Dendritic cell treated with granulocyte-macrophage colony-stimulating factor and Interleukin-4, amounts not matched to agents 40 ng/mL and 50 ng/mL, for 4 days (primary cell): ENCODE measurements at regions of chr5 and their contacts with region 1.

Region 1: DNA sequence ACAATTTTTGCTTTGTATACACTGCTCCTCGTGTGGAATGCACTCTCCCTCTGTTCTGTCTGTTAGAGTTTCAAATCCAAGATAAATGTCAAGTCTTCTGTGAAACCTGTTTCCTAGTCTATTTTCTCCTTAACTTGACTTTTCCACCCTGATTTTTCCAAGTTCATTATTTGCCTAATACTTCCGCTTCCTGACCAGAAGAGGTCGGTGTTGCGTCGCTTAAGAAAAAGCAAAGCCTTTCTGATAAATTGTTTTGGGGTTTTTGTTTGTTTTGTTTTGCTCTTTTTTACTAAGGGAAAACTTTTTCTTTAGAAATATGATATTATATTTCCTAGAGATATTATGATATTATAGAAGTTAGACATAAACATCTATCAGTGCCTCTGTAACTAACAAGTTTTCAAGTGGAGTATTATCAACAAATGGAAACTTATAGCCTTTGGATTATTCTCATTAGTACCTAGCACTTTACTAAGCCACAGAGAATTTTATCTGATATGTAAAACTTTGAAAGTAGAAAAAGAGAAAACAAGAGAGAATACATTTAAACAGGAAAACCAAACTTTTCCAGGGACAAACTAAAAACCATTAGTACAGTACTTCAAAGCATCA is 55.8 kb downstream of the PHAX start:
- H3K4me3 Mint-ChIP-seq: no peak overlapping the region
- H3K27ac Mint-ChIP-seq: no peak overlapping the region
- H3K4me1 Mint-ChIP-seq: peaks cover 9% of the 10 kb centered on the region
- H3K27me3 Mint-ChIP-seq: peaks cover 3% of the 10 kb centered on the region

Region 2: DNA sequence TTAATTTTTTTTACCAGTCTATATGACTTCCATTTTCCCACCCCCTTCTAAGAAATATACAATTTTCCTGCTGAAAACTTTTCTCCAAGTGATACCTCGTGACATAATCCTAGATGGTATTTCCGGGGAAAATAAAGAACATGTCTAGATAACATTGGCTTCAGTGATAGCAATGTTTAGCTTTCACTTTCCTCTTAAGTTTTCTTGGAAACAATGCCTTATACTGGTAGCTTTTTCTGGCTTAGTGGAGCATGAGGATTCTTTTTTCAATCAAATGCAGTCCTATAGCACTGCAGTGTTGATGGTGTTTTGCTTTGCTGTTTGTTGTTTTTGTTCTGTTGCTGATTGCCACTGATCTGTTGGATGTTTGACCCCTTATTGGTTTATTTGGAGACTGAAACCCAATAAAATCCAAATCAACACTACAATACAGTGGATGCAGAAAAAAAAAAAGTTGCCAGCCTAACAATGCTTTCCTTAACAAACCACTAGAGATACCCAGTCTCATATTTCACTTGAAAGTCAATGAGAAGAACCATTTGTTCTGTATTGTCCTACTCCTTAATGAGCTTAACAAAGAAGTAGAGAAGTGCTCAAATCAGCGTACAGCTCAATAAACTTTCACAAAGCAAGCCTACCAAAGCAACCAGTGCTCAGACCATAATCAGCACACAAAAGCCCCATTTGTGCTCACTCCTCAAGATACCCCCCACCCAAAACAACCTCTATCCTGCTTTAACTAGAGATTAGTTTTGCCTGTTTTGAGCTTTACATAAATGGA is 307.5 kb before region 1 on chr5:
- intact Hi-C with region 1: no loop called
- H3K4me3 Mint-ChIP-seq: no peak overlapping the region
- H3K27ac Mint-ChIP-seq: no peak overlapping the region
- H3K4me1 Mint-ChIP-seq: peaks cover 3% of the 10 kb centered on the region
- H3K27me3 Mint-ChIP-seq: peaks cover 20% of the 10 kb centered on the region

Region 3: DNA sequence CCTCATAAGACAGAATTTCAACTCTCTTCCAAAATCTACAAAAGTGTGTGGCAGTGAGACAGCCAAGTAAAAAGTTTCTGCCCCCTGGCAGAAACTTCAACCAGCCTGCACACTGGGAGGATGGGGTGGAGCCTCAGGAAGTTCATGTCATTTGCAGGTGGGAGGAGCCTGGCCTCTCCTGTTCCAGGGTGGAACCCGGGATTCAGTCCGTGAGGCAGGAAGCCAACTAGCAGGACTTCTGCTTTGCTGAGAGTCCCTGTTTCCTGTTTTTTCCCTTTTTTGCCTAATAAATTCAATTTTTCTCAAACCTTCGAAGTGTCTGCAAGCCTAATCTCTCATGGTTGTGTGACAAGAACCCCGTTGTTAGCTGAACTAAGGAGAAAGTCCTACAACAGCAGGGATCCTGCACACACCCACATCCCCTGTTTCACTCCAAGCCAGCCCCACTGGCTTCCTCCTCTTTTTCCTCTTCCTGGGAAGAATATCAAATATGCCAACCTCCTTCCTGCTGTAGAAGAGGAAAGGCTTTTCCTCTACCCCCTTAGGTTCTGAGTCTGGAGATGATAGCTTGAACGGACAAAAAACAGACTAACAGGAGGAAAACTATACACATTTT is 130.8 kb before region 1 on chr5:
- intact Hi-C with region 1: no loop called
- H3K4me3 Mint-ChIP-seq: peak overlapping the region; percentile 11
- H3K27ac Mint-ChIP-seq: peak overlapping the region; percentile 55
- H3K4me1 Mint-ChIP-seq: peaks cover 9% of the 10 kb centered on the region
- H3K27me3 Mint-ChIP-seq: no peaks in the 10 kb centered on the region

Region 4: DNA sequence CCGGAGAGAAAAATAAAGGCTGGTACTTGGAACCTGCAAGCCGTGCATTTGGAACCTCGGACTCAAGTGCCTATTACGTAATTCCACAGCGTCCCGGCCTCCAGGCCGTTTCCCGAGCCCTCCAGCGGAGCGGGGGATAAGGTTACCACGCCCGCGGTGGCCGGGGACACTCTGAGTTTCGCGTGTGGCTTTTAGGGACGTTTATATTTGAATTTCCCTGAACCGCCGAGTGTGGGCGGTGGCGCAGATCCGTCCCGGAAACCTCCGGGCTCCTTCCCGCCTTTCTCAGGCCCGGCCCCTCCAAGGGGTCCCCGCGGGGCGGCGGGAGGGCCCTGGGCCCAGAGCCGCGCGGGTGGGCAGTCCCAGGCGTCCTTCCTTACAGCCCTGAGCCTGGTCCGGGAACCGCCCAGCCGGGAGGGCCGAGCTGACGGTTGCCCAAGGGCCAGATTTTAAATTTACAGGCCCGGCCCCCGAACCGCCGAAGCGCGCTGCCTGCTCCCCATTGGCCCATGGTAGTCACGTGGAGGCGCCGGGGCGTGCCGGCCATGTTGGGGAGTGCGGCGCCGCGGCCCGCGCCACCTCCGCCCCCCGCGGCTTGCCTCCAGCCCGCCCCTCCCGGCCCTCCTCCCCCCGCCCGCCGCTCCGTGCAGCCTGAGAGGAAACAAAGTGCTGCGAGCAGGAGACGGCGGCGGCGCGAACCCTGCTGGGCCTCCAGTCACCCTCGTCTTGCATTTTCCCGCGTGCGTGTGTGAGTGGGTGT is 120.2 kb after region 1 on chr5 and contains the start of gene LMNB1:
- intact Hi-C with region 1: loop called (anchors 1 kb)
- H3K4me3 Mint-ChIP-seq: peak within 1 kb of the TSS; percentile 93
- H3K27ac Mint-ChIP-seq: peak within 1 kb of the TSS; percentile 98
- H3K4me1 Mint-ChIP-seq: peaks cover 32% of the 10 kb centered on the region
- H3K27me3 Mint-ChIP-seq: no peaks in the 10 kb centered on the region

Region 5: DNA sequence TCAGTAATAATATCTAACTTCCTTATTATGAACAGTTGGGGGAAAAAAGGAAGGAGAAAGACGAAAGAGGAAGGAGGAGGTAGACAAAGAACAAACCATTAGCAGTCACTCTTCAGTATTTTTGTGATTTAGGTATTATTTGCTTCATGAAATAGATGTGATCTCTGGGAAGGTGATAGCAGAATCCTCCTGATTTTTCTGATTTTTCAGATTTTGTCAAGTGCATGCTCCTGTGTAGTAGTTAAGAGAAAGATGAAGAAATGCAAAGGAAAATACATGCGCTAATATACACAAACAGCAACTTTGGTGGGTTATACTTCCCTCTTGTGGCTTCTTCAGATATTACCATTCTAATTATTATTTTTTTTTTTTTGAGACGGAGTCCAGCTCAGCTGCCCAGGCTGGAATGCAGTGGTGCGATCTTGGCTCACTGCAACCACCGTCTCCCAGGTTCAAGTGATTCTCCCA is 152.1 kb after region 1 on chr5:
- intact Hi-C with region 1: loop called (anchors 2 kb)
- H3K4me3 Mint-ChIP-seq: peak overlapping the region; percentile 76
- H3K27ac Mint-ChIP-seq: peak overlapping the region; percentile 82
- H3K4me1 Mint-ChIP-seq: peaks cover 37% of the 10 kb centered on the region
- H3K27me3 Mint-ChIP-seq: no peaks in the 10 kb centered on the region

Region 6: DNA sequence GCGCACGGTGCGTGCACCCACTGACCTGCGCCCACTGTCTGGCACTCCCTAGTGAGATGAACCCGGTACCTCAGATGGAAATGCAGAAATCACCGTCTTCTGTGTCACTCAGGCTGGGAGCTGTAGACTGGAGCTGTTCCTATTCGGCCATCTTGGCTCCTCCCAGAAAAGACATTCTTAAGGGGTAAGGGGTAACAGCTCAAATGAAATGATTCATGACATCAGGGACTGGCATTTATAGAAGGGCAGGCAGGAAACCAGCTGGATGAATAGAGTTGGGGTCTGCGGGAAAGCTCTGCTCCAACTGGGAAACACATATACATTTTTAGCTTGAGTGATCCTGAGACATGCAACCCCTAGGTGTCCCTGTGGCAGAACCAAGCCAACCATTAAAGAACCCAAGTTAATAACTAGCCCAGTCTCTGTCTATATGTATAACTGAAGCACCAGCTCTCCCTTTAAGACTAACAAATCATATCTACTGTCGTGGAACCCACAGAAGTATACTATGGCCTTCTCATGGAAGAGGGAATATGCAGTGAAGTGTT is 239.7 kb after region 1 on chr5:
- intact Hi-C with region 1: no loop called
- H3K4me3 Mint-ChIP-seq: no peak overlapping the region
- H3K27ac Mint-ChIP-seq: no peak overlapping the region
- H3K4me1 Mint-ChIP-seq: no peaks in the 10 kb centered on the region
- H3K27me3 Mint-ChIP-seq: no peaks in the 10 kb centered on the region

Region 7: GRCh38 chr5:127313847-127314473 is 657.5 kb after region 1 on chr5:
- intact Hi-C with region 1: loop called (anchors 1 kb)
- H3K4me3 Mint-ChIP-seq: no peak overlapping the region
- H3K27ac Mint-ChIP-seq: no peak overlapping the region
- H3K4me1 Mint-ChIP-seq: no peaks in the 10 kb centered on the region
- H3K27me3 Mint-ChIP-seq: peaks cover 2% of the 10 kb centered on the region

Region 8: DNA sequence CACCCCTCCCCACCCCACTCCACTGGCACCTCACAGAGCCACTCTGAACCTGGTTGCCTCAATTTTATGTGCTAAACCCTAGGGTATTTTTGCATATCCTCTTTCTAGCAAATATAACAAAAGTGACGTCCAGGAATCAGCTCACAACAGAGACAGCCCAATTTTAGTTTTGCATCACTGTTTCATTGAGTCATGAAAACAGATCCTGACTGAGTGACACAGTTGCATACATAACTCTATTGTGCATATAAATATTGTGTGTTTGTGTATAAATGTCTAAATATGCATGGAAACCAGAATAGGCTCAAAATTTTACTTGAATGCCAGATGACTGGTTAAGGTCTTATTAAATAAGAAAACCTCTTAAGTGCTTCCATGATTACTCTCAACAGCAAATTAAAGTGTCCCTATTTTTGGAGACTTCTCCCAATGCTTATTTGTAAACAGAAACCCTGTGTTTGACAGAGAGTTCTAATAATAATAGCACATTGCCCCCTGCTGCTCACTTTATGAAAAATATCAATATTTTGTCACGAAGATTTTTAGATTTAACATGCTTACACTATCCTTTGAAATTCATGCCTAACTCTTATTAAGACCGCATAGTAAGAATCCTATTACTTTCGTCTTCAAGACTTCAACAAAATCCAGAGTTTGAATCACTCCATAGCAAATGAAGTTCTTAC is 785.4 kb after region 1 on chr5:
- intact Hi-C with region 1: loop called (anchors 5 kb)
- H3K4me3 Mint-ChIP-seq: no peak overlapping the region
- H3K27ac Mint-ChIP-seq: no peak overlapping the region
- H3K4me1 Mint-ChIP-seq: no peaks in the 10 kb centered on the region
- H3K27me3 Mint-ChIP-seq: no peaks in the 10 kb centered on the region

Region 9: DNA sequence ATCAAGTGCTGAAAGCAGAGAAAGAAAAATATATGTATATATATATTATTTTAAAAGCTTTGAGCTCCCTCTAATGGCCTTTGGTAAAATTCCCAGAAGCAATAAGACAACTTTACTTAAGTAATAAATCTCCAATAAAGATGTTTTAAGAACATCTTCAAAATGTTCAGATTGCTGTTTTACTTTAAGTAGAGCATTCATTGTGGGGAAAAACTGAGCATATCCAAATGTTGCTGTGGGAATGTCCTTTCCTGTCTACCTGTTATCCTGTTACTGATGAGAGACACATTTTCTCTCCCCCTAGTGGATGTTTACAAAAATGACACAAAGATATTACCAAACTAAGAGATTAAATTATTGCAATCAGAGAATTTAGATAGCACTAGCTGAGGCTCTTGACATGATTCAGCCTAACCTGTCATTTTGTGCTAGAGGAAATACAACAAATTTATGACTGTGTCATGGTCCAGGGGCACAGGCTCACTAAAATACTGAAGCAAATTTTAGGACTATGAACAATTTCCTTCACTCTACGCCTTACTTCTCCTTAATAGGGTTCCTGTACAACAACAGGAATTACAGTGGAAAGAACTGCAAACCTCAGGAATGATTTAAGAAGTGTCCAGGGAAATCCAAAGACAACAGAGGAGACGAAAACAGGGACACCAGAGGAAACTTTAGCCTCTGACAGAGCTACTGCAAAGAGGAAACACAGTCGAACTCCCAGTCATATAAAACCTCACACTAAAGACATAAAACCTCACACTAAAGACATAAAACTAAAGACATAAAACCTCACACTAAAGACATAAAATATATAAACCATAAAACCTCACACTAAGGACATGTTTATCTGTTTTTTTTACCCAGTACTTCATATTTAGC is 836.6 kb after region 1 on chr5:
- intact Hi-C with region 1: loop called (anchors 5 kb)
- H3K4me3 Mint-ChIP-seq: no peak overlapping the region
- H3K27ac Mint-ChIP-seq: no peak overlapping the region
- H3K4me1 Mint-ChIP-seq: no peaks in the 10 kb centered on the region
- H3K27me3 Mint-ChIP-seq: peaks cover 7% of the 10 kb centered on the region